Tibial artery (tissue), 4 donors: ENCODE measurements at regions of chr11 and their contacts with region 1.

Region 1: GRCh38 chr11:61384271-61385242 is 7.8 kb upstream of the TMEM216 start:
- DNase-seq: no peak
- H3K4me3 ChIP-seq: no peak overlapping the region
- H3K27ac ChIP-seq: no peak overlapping the region
- H3K4me1 ChIP-seq: peaks cover 0 to 12% (median 2%) of the 10 kb centered on the region in 4 donors
- H3K27me3 ChIP-seq: no peaks in the 10 kb centered on the region
- CTCF ChIP-seq: no peak

Region 2: DNA sequence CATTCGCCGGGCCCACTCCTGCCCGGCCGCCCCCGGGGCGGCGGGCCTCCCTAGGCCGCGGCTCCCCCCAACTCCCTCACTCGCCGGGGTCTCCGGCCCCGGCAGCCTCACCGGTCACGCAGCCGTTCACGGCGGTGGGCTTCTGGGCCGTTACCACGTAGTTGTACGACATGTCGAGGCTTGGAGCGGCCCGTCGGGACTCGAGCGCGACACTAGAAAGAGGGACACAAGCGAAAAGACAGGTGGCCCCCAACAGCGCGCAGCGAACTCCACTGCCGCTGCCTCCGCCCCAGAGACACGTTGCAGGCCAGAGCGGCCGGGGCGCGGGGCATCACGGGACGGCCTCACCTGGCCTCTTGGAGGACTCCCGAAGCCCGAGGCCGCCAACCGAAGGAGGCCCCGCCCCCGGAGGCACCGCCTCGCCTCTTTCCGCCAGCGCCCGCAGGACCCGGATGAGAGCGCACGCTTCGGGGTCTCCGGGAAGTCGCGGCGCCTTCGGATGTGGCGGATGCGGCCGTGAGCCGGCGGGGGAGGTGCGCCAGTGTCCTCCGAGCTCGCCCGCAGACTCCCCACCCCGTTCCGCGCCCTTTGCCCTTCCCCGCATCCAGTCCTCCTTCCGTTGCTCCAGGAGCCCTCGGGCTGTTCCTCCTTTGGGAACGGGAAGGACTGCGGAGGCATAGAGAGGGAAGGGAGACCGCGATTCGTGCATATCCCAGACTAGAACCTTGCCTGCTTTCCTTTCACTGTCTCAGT is 51.6 kb before region 1 on chr11 and contains the starts of genes DDB1 and TKFC:
- intact Hi-C with region 1: loop called (anchors 1 kb)
- DNase-seq: peak; percentile 92 to 98
- H3K4me3 ChIP-seq: peak within 1 kb of the TSS; percentile 90 to 99
- H3K27ac ChIP-seq: peak within 1 kb of the TSS; percentile 92 to 93
- H3K4me1 ChIP-seq: peaks cover 0 to 40% (median 22%) of the 10 kb centered on the region in 4 donors
- H3K27me3 ChIP-seq: no peaks in the 10 kb centered on the region
- CTCF ChIP-seq: no peak

Region 3: DNA sequence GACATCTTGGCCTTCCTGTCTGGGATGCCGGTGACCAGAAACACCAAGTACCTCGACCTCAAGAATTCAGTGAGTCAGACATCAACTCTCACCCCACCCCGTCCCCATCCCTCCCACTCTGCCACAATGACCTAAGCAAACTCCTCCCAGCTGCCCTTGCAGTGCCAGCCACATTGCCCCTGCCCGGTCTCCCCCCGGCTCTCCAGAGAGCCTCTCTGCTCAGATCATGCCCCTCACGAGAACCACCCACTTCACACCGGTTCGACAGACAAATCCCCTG is 344.3 kb after region 1 on chr11:
- intact Hi-C with region 1: no loop called
- DNase-seq: no peak
- H3K4me3 ChIP-seq: no peak overlapping the region
- H3K27ac ChIP-seq: no peak overlapping the region
- H3K4me1 ChIP-seq: peaks cover 0 to 23% (median 8%) of the 10 kb centered on the region in 4 donors
- H3K27me3 ChIP-seq: no peaks in the 10 kb centered on the region
- CTCF ChIP-seq: no peak

Region 4: GRCh38 chr11:61967116-61967923 is 582.8 kb after region 1 on chr11 and contains the start of gene FTH1:
- intact Hi-C with region 1: no loop called
- DNase-seq: peak; percentile 87 to 96
- H3K4me3 ChIP-seq: peak within 1 kb of the TSS; percentile 68 to 95
- H3K27ac ChIP-seq: peak within 1 kb of the TSS; percentile 98 to 100
- H3K4me1 ChIP-seq: peaks cover 6 to 79% (median 63%) of the 10 kb centered on the region in 4 donors
- H3K27me3 ChIP-seq: no peaks in the 10 kb centered on the region
- CTCF ChIP-seq: peak in 1 of 2 experiments; percentile 5